Activated CD4-positive, alpha-beta T cell treated with anti-CD3 and anti-CD28 coated beads, Interleukin-2, amount 10 ng/mL, durations not matched to agents 7 days and 5 days (primary cell): ENCODE measurements at regions of chr6 and their contacts with region 1.

Region 1: GRCh38 chr6:24874776-24875534 is 60.8 kb downstream of the RIPOR2 start:
- DNase-seq: no peak
- H3K4me3 Mint-ChIP-seq: no peak overlapping the region
- H3K27ac Mint-ChIP-seq: peak overlapping the region; percentile 2
- H3K4me1 Mint-ChIP-seq: peaks cover 49% of the 10 kb centered on the region
- H3K27me3 Mint-ChIP-seq: no peaks in the 10 kb centered on the region

Region 2: DNA sequence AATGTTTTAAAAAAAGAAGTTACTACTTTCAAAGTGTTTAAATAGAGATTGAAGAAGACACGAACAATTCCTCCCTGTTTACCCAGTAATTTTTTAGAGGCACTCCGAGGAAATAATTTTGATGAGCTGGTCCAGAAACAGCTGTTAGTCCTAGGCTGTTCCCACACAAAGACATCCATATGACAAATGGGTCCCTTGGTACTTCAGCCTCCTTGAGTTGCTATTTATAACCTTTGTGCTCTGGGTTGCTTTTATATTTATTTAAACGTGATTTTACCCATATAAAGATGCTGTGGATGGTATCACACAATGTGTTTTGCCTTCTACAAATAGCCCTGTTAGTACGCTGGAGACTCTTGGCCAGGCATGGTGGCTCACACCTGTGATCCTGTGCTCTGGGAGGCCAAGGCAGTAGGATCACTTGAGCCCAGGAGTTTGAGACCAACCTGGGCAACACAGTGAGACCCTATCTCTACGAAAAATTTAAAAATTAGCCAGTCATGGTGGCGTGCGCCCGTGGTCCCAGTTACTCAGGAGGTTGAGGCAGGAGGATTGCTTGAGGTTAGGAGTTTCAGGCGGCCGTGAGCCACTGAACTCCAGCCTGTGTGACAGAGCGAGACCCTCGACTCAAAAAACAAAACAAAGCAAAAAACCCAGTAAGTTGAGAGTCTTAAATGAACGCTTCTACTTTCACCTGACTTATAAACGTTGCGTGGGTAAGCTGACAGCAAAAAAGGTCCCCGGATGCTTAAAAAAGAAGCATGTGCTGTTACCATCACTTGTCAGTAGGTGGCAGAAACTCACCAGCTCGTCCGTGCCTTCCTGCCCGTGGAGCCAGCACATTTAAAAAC is 19.3 kb before region 1 on chr6:
- CTCF ChIA-PET with region 1: interaction called, 11 read pairs
- POLR2A ChIA-PET with region 1: no interaction called
- DNase-seq: peak; percentile 81
- H3K4me3 Mint-ChIP-seq: no peak overlapping the region
- H3K27ac Mint-ChIP-seq: peak overlapping the region; percentile 88
- H3K4me1 Mint-ChIP-seq: peaks cover 59% of the 10 kb centered on the region
- H3K27me3 Mint-ChIP-seq: no peaks in the 10 kb centered on the region